ENCODE measurements at regions of chr17 and their contacts with region 1.

Region 1: DNA sequence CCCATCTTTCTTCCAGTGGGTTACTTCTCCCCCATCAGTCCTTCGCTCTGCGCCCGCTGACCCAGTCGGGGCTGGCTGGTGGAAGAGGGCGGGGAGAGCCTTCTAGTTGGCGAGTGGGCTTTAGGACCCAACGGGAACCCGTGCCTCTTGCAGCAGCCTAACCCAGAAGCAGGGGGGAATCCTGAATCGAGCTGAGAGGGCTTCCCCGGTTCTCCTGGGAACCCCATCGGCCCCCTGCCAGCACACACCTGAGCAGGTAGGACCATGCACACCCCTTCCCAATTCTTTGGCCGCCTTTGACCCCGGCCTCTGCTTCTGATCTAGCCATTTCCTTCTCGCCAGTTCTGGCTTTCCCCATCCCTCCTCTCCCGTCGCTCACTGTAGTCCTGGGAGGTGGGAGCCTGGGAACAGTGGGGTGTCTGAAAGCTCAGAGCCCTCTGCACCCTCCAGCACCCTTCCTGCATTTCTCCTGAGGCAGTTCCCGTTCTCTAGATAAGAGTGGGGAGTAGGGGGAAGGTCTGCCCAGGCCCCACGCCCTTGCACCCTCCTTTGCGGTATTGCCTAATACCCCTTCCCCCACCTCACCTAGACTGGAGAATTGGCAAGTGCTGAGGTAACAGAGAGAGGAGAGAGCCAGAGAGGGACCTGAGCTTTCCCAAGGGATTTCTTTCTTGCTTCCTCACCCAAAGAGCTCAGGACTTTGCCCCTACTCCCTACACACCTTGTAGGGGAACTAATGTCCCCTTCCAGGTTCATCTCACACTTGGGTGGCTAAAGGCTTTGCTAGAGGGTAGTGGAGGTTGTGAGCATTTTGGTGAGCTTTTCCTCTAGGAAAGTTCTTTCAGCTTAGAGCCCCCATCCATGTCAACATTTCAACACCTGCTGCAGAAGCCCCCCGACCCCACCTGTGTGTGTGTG is at the start of gene RARA:
- DNase-seq: peak; percentile 50
- ATAC-seq: peak; percentile 34
- H3K4me3 Mint-ChIP-seq: no peak within 1 kb of the TSS
- H3K27ac Mint-ChIP-seq: no peak within 1 kb of the TSS
- H3K4me1 Mint-ChIP-seq: peaks cover 38% of the 10 kb centered on the region
- H3K27me3 Mint-ChIP-seq: no peaks in the 10 kb centered on the region
- total RNA-seq, gene RARA: 29.8 to 40.2 TPM

Region 2: GRCh38 chr17:39996800-39997199 is 312.5 kb before region 1 on chr17:
- CTCF ChIA-PET with region 1: no interaction called
- POLR2A ChIA-PET with region 1: no interaction called
- intact Hi-C with region 1: no loop called
- DNase-seq: no peak
- ATAC-seq: no peak
- H3K4me3 Mint-ChIP-seq: no peak overlapping the region
- H3K27ac Mint-ChIP-seq: no peak overlapping the region
- H3K4me1 Mint-ChIP-seq: peaks cover 8% of the 10 kb centered on the region
- H3K27me3 Mint-ChIP-seq: no peaks in the 10 kb centered on the region

Region 3: GRCh38 chr17:40293363-40293762 is 15.9 kb before region 1 on chr17:
- CTCF ChIA-PET with region 1: interaction called, 15 read pairs
- POLR2A ChIA-PET with region 1: interaction called, 10 read pairs
- intact Hi-C with region 1: no loop called
- DNase-seq: no peak
- ATAC-seq: no peak
- H3K4me3 Mint-ChIP-seq: no peak overlapping the region
- H3K27ac Mint-ChIP-seq: no peak overlapping the region
- H3K4me1 Mint-ChIP-seq: peaks cover 46% of the 10 kb centered on the region
- H3K27me3 Mint-ChIP-seq: no peaks in the 10 kb centered on the region